ENCODE measurements at regions of chr17 and their contacts with region 1.

Region 1: DNA sequence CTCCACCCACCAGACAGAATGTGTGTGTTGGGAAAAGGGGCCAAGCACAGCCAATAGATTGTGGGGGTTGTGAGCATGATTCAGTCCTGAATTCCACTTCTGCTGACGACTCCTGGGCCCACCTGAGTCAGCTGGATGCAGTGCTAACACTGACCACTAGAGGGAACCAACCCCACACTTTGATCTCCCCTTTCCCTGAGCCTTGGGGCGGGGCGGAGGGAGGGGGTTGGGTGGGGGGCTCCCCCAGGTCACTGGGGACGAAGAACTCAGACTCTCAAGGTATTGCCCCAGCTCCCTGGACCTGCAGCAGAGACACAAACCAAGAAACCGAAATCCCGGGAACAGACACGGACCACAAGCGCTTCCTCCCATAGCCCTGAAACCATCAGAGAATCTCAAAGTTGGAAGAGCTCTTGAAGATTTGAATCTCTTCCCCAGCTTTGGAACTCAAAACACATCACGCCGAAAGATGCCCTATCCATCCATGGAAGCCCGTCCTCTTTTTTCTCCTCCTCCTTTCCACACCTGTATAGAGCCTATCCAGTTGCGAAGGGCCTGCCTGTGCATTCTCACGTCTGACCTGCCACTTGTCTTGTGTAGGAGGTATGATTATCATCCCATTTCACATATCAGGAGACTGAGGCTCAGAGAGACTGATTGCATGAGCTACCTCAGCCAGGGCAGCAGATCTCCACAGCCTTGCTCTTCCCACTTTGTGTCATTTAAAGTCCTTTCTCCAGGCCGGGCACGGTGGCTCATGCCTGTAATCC is 784 bp upstream of the CSHL1 start:
- DNase-seq: peak; percentile 73

Region 2: GRCh38 chr17:63931099-63931561 is 19.3 kb after region 1 on chr17:
- CTCF ChIA-PET with region 1: no interaction called
- POLR2A ChIA-PET with region 1: no interaction called
- DNase-seq: no peak

Region 3: DNA sequence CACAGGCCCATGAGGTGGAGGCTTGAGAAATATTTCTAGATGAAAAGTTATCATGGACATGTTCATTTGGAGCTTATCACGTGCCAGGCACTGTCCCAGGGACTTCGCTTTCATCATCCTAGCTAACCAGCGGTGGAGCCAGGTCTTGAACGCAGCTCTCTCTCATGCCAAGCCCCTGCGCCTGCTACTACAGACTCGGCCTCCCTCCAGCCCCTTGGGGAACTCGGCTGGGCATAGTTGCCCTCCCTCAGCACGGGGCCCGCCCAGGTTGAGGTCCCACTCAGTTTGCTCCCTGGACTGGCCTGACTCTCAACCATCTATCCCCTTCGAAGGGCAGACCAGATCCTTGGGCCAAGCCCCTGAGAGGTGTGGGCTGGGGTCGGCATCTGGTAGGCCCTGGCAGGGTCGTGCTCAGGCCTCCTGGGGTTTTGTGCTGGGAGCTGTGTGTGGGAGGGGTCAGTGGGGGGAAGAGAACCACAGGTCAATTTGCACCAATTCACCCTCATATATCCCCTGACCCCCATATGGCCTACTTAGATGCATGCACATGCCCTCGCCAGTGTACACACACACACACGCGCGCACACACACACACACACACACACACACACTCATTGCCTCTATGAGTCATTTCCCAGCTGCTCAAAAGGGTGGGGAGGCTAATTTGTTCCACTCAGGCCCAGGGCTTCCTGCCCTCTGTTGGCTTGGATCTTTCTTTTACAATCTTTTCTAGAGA is 73.0 kb after region 1 on chr17:
- CTCF ChIA-PET with region 1: interaction called, 10 read pairs
- POLR2A ChIA-PET with region 1: no interaction called
- DNase-seq: no peak

Measured in HEK293T (cell line).